Activated T-helper 2 cell treated with anti-CD3 and anti-CD28 coated beads, Interferon-gamma antibody, Interleukin-2, Interleukin-4, amounts not matched to agents 10 μg/mL and 5 μg/mL and 100 μg/mL, durations not matched to agents 14 hours and 24 hours and 36 hours (primary cell): ENCODE measurements at regions of chr2 and their contacts with region 1.

Region 1: GRCh38 chr2:105858868-105859693 is 114.4 kb downstream of the NCK2 start:
- DNase-seq: no peak
- H3K4me3 Mint-ChIP-seq: peak overlapping the region; percentile 46
- H3K27ac Mint-ChIP-seq: peak overlapping the region; percentile 86
- H3K4me1 Mint-ChIP-seq: peaks cover 79% of the 10 kb centered on the region
- H3K27me3 Mint-ChIP-seq: no peaks in the 10 kb centered on the region

Region 2: GRCh38 chr2:105697781-105698449 is 161.2 kb before region 1 on chr2:
- intact Hi-C with region 1: no loop called
- DNase-seq: no peak
- H3K4me3 Mint-ChIP-seq: no peak overlapping the region
- H3K27ac Mint-ChIP-seq: no peak overlapping the region
- H3K4me1 Mint-ChIP-seq: no peaks in the 10 kb centered on the region
- H3K27me3 Mint-ChIP-seq: peaks cover 16% of the 10 kb centered on the region

Region 3: DNA sequence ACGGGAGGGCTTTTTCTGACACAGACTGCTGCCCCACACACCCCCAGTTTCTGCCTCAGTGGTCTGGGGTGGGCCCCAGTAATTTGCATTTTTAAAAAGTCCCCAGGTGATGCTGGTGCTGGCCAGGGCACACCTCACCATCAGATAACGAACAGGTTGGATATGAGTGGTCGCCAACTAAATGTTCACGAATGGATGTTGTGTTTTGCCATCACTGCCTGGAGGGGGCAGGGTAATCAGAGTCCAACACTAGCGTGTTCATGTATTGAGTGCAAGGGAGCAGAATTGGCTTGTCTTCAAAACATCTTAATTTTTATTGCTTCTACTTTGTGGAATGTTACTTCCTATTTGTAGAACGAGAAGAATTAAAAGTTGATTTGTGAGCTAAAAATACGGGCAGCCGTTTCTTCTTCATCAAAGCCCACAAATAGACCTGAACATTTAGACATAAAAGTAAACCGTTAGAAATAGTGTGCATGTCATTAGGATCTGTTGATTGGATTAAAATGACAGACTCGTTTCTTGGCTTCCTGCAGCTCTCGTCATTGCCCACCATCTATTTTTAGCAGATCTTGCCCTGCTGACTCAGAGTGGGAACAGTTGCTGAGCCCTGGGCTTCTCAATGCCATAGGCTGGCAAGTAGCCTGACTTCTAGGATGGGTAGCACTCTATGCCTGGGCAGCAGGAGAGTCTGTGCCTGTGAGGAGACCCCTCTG is 69.2 kb before region 1 on chr2:
- intact Hi-C with region 1: loop called (anchors 1 kb)
- DNase-seq: peak; percentile 66
- H3K4me3 Mint-ChIP-seq: peak overlapping the region; percentile 65
- H3K27ac Mint-ChIP-seq: peak overlapping the region; percentile 94
- H3K4me1 Mint-ChIP-seq: peaks cover 87% of the 10 kb centered on the region
- H3K27me3 Mint-ChIP-seq: no peaks in the 10 kb centered on the region

Region 4: DNA sequence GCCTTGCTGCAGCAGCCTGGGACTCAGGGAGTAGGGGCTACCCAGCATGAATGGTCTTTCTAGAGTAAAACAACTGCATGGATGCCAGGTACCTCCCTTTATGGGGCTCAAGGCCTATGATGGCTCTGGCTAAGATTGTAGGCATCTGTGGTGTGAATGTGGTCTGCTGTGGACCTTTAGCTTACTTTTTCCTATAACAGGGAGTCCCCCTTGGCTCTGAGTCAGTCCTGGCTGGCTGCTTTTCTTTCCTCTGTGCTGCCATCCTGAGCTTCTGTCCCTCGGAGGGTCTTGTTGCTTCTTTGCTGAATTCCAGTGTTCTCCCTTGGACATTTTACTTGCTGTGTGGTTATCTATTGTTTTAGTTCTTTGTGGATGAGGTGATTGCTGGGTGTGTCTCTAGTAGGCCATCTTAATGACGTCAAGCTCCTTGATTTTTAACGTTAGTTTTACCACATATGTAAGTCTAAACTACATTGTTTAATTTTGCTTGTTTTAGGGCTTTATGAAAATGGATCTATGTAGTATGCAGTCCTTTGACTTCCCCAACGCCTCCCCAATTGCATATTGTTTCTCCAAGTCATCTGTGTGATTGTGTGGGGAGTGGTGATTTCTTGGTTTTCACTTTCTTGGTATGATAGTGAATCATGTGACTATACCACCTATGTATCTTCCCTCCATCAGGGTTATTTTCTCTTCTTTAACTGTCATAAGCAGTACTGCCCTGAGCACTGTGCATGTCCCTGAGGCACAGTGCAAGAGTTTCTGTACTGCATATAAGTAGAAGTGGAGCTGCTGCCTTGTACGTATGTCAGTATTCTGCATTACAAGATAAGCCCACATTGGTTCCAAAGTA is 22.0 kb before region 1 on chr2:
- intact Hi-C with region 1: loop called (anchors 1 kb)
- DNase-seq: no peak
- H3K4me3 Mint-ChIP-seq: peak overlapping the region; percentile 26
- H3K27ac Mint-ChIP-seq: peak overlapping the region; percentile 78
- H3K4me1 Mint-ChIP-seq: peaks cover 73% of the 10 kb centered on the region
- H3K27me3 Mint-ChIP-seq: no peaks in the 10 kb centered on the region

Region 5: DNA sequence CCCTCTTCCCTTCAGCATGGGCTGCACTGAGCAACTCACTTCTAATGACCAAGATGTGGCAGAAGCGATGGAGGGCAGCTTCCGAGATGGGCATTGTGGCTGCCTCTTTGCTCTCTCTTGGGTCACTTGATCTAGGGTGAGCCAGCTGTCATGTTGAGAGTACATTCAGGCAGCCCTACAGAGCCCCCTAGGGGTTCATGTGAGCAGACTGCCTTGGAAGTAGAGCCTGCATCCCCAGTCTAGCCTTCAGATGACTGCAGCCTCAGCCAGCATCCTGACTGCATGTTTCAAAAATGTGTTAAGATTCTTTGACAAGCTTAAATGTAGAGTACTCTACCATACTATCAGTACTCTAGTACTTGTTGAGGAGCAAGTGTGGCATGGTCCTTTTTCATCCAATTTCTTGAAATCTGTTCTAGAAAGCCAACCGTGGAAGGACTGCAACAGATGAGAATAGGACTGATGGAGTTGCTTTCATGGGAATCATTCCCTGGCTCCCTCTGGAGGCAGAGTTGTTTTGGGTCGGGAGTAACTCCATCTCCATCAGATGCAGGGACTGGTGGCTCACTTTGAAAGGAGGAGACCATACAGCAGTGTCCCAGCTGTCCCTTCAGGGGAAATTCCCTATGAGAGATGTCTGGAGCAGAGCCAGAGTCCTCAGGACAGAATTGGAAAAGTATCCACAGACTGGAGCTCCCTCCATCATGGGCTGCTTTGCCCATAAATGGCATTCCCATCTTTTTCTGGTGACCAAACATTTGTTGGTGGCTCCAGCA is 29.7 kb after region 1 on chr2:
- intact Hi-C with region 1: loop called (anchors 1 kb)
- DNase-seq: no peak
- H3K4me3 Mint-ChIP-seq: no peak overlapping the region
- H3K27ac Mint-ChIP-seq: no peak overlapping the region
- H3K4me1 Mint-ChIP-seq: peaks cover 48% of the 10 kb centered on the region
- H3K27me3 Mint-ChIP-seq: no peaks in the 10 kb centered on the region

Region 6: DNA sequence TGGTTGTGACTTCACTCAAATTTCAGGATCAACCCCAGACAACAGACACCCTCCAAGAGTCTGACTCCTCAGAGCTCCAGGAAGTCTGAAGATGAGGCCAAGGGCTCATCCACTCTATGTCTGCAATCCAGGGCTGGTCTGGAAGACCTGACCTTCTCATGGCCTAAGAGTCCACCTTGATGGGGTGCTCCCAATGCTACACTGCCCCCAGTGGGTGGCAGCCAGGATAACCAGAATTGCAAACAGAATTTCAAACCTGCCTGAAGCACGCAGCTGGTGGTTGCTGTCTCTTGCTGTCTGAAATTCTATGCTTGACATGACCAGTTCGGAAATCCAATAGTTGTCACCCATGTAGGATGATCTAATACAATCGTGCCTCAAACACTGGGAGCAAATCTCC is 239.0 kb after region 1 on chr2:
- intact Hi-C with region 1: loop called (anchors 10 kb)
- DNase-seq: no peak
- H3K4me3 Mint-ChIP-seq: no peak overlapping the region
- H3K27ac Mint-ChIP-seq: no peak overlapping the region
- H3K4me1 Mint-ChIP-seq: peaks cover 33% of the 10 kb centered on the region
- H3K27me3 Mint-ChIP-seq: no peaks in the 10 kb centered on the region